A549 (cell line): ENCODE measurements at regions of chr9 and their contacts with region 1.

Region 1: DNA sequence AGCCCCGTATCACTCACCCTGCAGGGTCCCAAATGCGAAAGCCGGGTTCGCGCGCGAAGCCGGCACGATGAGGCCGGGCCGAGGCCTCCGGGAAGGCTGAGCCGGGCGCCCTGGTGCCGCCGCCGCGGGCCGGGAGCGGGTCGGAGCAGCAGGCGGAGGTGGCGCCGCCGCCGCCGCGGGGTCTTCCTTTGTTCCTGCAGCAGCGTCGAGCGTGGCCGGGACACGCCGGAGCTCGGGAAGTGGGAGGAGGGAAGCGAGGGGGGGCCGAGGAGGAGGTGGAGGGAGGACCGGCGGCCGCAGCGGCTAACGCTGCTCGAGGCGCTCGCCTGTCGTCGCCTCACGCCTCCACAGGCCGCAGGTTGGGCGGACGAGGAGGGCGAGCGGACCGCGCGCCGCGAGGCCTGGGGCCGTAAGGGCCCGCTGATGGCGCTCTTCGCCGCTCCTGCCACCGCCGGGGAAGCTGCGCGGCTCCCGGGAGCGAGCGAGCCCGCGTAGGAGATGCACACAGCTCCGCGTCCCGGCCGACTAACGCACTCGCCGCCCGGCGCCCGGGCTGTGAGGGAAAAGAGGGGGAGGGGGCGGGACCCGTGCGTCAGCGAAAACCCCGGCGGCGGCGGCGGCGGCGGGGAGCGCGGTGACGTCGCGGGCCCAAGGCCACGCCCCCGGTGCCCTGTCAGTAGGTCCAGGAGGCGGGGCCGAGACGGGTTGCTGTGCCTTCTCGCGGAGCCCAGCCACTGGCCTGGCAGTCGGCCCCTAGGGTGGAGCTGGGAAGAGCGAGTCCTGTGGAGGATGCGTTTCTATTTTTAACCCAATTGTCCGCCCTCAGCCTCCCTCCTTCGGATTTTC is at the start of gene ZFAND5:
- DNase-seq: peak; percentile 94 to 98
- ATAC-seq: peak; percentile 82 to 89
- H3K4me3 ChIP-seq: peak within 1 kb of the TSS; percentile 91
- H3K27ac ChIP-seq: peak within 1 kb of the TSS; percentile 99
- H3K4me1 ChIP-seq: peaks cover 26% of the 10 kb centered on the region
- CTCF ChIP-seq: peak; percentile 21; the same call in 1 of the 3 replicates
- EP300 ChIP-seq: peak in 1 of 2 experiments; percentile 38; a peak in 2 of 5 replicates
- POLR2A ChIP-seq: peak; percentile 95
- RAD21 ChIP-seq: peak; percentile 26 to 68; a peak in 4 of 5 replicates
- polyA plus RNA-seq, gene ZFAND5: 234 and 315 TPM in 2 replicates

Region 2: DNA sequence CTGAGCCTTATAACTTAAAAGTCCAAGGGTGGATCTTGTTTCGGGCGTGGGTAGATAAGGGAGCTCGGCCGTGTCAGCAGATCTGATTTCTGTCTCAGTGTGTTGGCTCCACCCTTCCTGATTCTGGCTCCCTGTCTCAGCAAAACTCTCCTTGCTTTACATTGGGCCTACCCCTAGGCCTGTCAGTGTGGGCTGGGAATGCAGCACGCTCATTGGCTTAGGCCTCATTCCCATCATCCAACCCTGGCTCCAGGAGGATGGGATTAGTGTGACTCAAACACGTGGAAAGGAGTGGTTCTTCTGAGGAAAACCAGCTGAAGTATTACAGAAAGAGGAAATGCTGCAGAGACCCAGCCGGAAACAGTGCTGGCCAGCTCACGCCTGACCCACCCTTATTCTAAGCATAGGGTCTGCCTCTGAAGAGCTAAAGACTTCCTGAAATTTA is 59.8 kb before region 1 on chr9:
- CTCF ChIA-PET with region 1: interaction called, 3 read pairs
- POLR2A ChIA-PET with region 1: interaction called, 26 read pairs
- DNase-seq: peak; percentile 97 to 99
- ATAC-seq: peak; percentile 100
- H3K4me3 ChIP-seq: peak overlapping the region; percentile 51
- H3K27ac ChIP-seq: peak overlapping the region; percentile 87 to 90
- H3K4me1 ChIP-seq: peaks cover 31% of the 10 kb centered on the region
- CTCF ChIP-seq: no peak
- EP300 ChIP-seq: no peak
- POLR2A ChIP-seq: peak; percentile 61
- RAD21 ChIP-seq: no peak; a peak in 1 of 5 replicates

Region 3: GRCh38 chr9:72428329-72428728 is 63.4 kb after region 1 on chr9:
- CTCF ChIA-PET with region 1: no interaction called
- POLR2A ChIA-PET with region 1: interaction called, 53 read pairs
- DNase-seq: no peak
- ATAC-seq: no peak
- H3K4me3 ChIP-seq: no peak overlapping the region
- H3K27ac ChIP-seq: no peak overlapping the region
- H3K4me1 ChIP-seq: peaks cover 2% of the 10 kb centered on the region
- CTCF ChIP-seq: no peak
- EP300 ChIP-seq: no peak
- POLR2A ChIP-seq: no peak
- RAD21 ChIP-seq: no peak

Region 4: DNA sequence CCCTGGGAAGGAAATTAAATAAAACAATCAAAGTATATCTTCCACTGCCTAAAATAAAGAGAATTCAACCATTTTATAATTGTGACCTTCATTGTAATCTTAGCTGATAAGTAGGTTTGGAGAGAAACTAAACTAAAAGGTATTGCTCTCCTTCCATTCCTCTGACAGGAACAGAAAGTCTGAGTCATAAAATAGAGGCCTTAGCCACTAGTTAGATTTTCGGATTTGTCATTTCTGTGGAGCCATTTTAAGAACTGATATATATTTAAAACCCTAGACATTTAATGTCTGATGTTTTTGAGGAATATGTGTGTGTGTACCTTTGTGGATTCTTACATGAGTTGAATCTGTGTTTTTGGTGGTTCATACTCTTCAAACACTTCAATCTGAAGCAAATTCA is 144.7 kb after region 1 on chr9:
- CTCF ChIA-PET with region 1: no interaction called
- POLR2A ChIA-PET with region 1: interaction called, 13 read pairs
- DNase-seq: no peak
- ATAC-seq: no peak
- H3K4me3 ChIP-seq: no peak overlapping the region
- H3K27ac ChIP-seq: peak overlapping the region in 1 of 2 experiments; percentile 3; a peak in 1 of 6 replicates
- H3K4me1 ChIP-seq: peaks cover 19% of the 10 kb centered on the region
- CTCF ChIP-seq: no peak
- EP300 ChIP-seq: no peak
- POLR2A ChIP-seq: no peak
- RAD21 ChIP-seq: no peak

Region 5: GRCh38 chr9:72577212-72577753 is 212.4 kb after region 1 on chr9:
- CTCF ChIA-PET with region 1: interaction called, 4 read pairs
- POLR2A ChIA-PET with region 1: interaction called, 79 read pairs
- DNase-seq: peak; percentile 52 to 83
- ATAC-seq: peak; percentile 51 to 56; a peak in 5 of 6 replicates
- H3K4me3 ChIP-seq: no peak overlapping the region
- H3K27ac ChIP-seq: peak overlapping the region; percentile 72 to 89
- H3K4me1 ChIP-seq: peaks cover 59% of the 10 kb centered on the region
- CTCF ChIP-seq: no peak
- EP300 ChIP-seq: peak; percentile 54 to 73; a peak in 3 of 5 replicates
- POLR2A ChIP-seq: no peak
- RAD21 ChIP-seq: peak in 1 of 2 experiments; percentile 55; a peak in 2 of 5 replicates

Region 6: DNA sequence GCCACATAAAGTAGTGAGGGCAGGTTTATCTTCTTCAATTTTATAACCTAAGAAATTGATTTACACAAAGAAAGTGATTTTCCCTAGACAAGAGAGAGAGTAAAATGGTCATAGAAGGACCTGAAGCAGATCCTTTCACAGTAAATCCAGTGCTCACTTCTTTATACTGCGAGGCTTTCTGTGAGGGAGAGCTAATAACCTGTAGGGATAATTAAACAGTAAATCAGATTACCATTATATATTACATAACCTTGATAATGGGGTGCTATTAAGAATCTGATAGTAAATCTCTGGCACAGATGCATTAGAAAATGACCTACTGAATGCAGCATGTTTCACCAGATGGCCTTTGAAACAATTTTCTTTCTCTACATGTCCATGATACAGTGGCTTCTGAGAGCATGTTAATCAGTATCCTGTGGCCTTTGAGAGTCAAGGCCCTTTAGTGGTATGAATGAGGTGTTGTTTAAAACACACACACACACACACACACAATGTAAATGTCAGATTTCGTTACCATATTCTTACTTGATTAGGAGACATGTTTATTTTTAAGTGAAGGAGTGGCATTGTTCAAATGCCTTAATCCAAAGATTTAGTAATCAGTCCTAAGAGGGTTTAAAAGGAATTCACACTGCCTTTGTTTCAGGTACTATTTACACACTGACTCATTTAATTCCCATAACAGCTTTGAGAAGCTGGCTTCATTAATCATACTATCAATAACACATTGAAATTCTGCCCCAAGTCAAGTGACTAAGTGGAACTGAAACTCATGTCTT is 463.2 kb after region 1 on chr9:
- CTCF ChIA-PET with region 1: interaction called, 11 read pairs
- POLR2A ChIA-PET with region 1: interaction called, 4 read pairs
- DNase-seq: peak; percentile 44 to 86
- ATAC-seq: peak; percentile 82 to 84
- H3K4me3 ChIP-seq: no peak overlapping the region
- H3K27ac ChIP-seq: peak overlapping the region; percentile 77 to 87
- H3K4me1 ChIP-seq: peaks cover 47% of the 10 kb centered on the region
- CTCF ChIP-seq: no peak
- EP300 ChIP-seq: peak; percentile 70 to 84; a peak in 3 of 5 replicates
- POLR2A ChIP-seq: no peak
- RAD21 ChIP-seq: peak in 1 of 2 experiments; percentile 14; a peak in 1 of 5 replicates